Mammary epithelial cell (primary cell): ENCODE measurements at regions of chr2 and their contacts with region 1.

Region 1: GRCh38 chr2:162795312-162795711 is 43.3 kb downstream of the KCNH7 start:
- DNase-seq: no peak
- H3K4me3 ChIP-seq: no peak overlapping the region
- H3K27ac ChIP-seq: no peak overlapping the region
- H3K4me1 ChIP-seq: no peaks in the 10 kb centered on the region
- H3K27me3 ChIP-seq: peaks cover 1% of the 10 kb centered on the region
- CTCF ChIP-seq: peak in 1 of 2 donors; percentile 55

Region 2: GRCh38 chr2:162327134-162327769 is 468.1 kb before region 1 on chr2:
- CTCF ChIA-PET with region 1: no interaction called
- dilution Hi-C with region 1: no loop called
- in situ Hi-C with region 1: no loop called
- intact Hi-C with region 1: loop called (anchors 1 kb)
- DNase-seq: no peak
- H3K4me3 ChIP-seq: no peak overlapping the region
- H3K27ac ChIP-seq: no peak overlapping the region
- H3K4me1 ChIP-seq: no peaks in the 10 kb centered on the region
- H3K27me3 ChIP-seq: no peaks in the 10 kb centered on the region
- CTCF ChIP-seq: peak; percentile 57 to 66

Region 3: DNA sequence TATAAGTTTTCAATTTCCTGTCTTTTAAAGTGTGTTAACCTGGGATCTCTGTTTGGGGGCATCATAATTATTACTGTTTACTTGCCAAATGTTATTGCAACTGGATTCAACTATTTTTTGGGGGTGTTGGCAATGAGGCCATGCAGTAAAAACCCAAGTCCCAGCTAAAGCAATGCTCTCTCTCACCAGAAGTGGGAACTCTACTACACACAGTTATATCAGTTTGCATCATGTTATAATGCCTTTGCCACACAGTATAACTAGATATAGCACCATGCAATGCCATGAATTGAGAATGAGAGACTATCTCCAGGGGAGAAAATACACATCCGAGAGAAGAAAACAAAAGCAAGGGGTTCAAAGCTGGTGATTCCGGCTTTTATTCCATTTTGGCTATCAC is 372.4 kb before region 1 on chr2:
- CTCF ChIA-PET with region 1: no interaction called
- dilution Hi-C with region 1: no loop called
- in situ Hi-C with region 1: no loop called
- intact Hi-C with region 1: loop called (anchors 2 kb)
- DNase-seq: no peak
- H3K4me3 ChIP-seq: no peak overlapping the region
- H3K27ac ChIP-seq: no peak overlapping the region
- H3K4me1 ChIP-seq: no peaks in the 10 kb centered on the region
- H3K27me3 ChIP-seq: peaks cover 4% of the 10 kb centered on the region
- CTCF ChIP-seq: peak; percentile 22 to 47

Region 4: DNA sequence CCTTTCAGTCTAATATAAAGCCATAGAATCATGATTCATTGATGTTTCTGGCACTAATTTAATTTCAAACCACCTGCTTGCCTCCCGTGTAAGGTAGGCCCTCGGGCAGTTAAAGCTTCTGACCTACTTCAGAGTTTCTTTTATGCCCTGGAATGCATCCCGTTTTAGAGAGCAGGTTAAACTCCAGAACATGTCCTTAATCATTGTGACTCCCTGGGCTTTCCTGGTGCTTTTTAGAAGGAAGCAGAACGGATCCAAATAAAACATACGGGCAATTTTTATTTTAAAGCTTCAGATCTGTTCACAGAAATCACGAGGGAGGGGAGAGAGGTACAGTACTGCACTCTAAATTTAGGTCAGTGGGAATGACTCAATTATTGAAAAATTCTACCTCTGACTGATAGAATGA is 316.6 kb before region 1 on chr2:
- CTCF ChIA-PET with region 1: no interaction called
- dilution Hi-C with region 1: no loop called
- in situ Hi-C with region 1: no loop called
- intact Hi-C with region 1: no loop called
- DNase-seq: peak; percentile 87
- H3K4me3 ChIP-seq: no peak overlapping the region
- H3K27ac ChIP-seq: no peak overlapping the region
- H3K4me1 ChIP-seq: peaks cover 34% of the 10 kb centered on the region
- H3K27me3 ChIP-seq: no peaks in the 10 kb centered on the region
- CTCF ChIP-seq: no peak

Region 5: GRCh38 chr2:162524192-162524591 is 271.1 kb before region 1 on chr2:
- CTCF ChIA-PET with region 1: no interaction called
- dilution Hi-C with region 1: no loop called
- in situ Hi-C with region 1: no loop called
- intact Hi-C with region 1: loop called (anchors 2 kb)
- DNase-seq: no peak
- H3K4me3 ChIP-seq: no peak overlapping the region
- H3K27ac ChIP-seq: no peak overlapping the region
- H3K4me1 ChIP-seq: no peaks in the 10 kb centered on the region
- H3K27me3 ChIP-seq: no peaks in the 10 kb centered on the region
- CTCF ChIP-seq: peak in 1 of 2 donors; percentile 11